ENCODE measurements at regions of chr7 and their contacts with region 1.

Region 1: DNA sequence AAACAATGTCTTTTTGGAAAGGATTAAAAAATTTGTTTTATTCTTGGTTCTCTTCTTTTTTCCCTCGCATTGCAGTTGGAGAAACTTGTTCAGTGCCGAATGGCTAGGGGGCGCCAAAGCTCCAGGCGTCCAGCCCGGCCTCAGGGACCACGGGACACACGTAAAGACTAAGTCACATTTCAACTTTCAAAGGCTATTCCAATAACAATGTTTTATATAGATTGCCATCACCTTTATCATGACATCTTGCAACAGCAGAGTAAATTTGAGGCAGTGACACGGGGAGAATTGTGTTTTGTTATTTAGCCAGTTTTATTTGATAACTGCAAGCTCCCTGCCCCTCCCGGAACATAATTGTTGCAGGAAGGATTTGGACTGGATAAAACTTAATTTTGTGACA is 2.2 kb upstream of the IGFBP3 start:
- DNase-seq: peak; percentile 61

Region 2: DNA sequence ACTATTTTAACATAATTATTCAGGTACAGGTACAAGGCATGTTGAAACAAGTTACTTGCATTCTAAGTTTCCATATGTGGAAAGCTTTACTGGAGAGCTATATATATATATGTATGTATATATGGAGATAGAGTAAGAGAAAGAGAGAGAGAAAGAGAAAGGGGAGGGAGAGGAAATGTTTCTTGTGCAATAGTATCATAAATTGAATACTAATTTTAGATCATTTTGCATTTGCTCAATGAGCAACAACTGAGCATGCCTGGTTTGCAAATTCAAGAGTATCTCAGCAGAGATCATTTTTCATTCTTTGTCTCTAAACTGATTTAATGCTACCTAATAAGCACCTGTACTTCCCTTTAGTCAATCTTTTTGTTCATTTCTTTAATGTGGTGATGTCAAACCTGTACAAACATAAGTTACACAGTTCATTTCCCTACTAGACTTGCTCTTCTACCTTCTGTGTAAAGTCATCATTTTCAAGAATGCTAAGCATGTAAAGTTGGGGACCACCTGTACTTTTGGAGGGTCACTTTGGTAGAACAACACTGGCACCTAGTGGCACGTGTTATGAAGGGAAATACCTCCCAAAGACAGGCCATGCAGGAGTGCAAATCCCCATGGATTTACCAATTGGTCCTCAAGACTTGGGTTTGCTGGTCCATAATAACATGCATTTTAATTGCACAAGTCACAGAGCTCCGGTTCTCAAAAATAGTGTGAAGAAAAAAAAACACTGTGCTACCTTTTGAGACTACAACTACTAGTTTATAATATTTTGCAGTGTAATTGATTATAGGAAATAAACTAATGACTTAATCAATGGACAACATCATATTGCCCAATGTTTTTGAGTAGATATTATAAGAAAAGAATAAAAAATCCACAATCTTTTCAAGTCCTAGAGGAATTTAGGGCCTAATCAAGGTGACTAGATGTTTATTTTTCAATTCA is 429.0 kb after region 1 on chr7:
- CTCF ChIA-PET with region 1: interaction called, 12 read pairs
- POLR2A ChIA-PET with region 1: no interaction called
- DNase-seq: peak; percentile 16

Region 3: DNA sequence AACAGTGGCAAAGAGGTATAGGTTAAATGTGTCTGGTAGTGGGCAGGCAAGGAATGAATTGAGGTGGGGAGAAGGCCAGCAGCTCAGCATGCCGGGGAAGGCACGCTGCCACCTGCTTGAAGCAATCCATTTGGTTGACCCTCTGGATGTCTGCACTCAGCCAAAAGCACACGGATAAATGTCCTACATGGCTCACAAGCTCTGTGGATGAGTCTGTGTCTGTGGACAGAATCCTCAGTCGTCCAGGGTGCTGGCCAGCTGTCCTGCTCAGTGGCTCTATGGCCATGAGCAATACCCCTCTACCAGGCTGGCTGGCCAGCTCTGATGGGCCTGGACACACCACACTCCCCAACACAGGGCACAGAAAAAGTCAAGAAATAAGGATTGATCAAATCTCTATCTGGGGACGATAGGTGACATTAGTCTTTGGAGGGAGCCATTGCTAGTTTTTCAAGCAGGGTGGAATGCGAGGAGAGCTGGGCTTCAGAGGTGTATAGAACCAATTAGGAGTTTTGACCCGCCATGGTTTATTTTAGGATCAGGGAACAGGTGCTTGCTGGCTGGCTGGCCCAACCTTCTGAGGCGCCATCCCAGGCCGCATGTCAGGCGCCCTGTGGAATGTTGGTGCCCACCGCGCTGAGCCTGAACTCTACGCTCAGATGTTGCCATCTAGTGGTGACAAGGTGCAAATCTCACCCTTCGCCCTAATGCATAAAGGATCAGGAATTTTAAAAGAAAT is 1165.2 kb after region 1 on chr7:
- CTCF ChIA-PET with region 1: interaction called, 13 read pairs
- POLR2A ChIA-PET with region 1: no interaction called
- DNase-seq: peak; percentile 68

Measured in HEK293T (cell line).